ENCODE measurements at regions of chr9 and their contacts with region 1.

Region 1: GRCh38 chr9:98654247-98654646 is 54.5 kb downstream of the GABBR2 start:
- DNase-seq: no peak
- ATAC-seq: no peak
- H3K4me3 ChIP-seq: no peak overlapping the region
- H3K27ac ChIP-seq: no peak overlapping the region
- H3K4me1 ChIP-seq: no peaks in the 10 kb centered on the region
- H3K27me3 ChIP-seq: no peaks in the 10 kb centered on the region
- CTCF ChIP-seq: no peak
- POLR2A ChIP-seq: no peak

Region 2: DNA sequence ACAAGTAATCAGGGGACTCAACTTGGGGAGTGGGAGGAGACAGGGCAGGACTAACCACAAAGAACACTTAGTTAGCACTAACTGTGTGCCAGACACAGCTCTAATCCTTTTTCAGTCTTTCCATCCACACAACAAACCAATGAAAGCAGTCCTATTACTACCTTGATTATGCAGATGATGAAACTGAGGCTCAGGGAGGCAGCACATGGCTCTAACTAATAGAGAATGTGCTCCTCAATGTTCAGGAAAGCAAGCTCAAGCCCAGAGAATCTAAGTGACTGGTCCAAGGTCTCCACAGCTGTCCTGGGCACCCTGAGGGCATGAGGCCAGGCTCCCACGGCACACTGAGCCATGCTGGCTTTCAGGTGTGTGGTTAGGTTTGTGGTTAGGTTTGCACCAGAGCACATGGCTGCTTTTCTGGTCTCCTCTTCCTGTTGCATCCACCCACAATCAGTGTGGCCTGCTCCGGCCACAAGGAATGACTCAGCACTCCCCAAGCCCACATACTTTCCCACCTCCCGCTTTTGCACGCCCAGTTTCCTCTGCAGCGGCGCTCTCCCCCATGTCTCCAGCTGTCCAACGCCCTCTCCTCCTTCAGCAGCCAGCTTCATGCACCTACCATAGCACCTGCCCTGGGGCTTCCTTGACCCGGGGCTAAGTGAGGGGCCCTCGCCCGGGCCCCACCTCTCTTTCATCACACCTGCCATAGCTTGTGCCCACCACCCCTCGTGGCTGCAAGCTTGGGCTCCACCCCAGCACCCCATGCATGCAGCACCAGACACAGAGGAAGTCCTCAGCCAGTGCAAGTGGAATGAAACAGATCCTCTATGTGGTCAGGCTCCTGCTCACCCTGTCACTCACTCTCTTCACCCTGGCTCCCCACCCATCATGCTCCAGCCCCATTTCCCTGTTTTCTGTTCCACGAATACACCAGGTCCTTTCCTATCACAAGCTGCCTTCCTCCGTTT is 78.6 kb before region 1 on chr9:
- in situ Hi-C with region 1: no loop called
- intact Hi-C with region 1: loop called (anchors 10 kb)
- DNase-seq: no peak
- ATAC-seq: no peak
- H3K4me3 ChIP-seq: no peak overlapping the region
- H3K27ac ChIP-seq: no peak overlapping the region
- H3K4me1 ChIP-seq: no peaks in the 10 kb centered on the region
- H3K27me3 ChIP-seq: peaks cover 0 to 4% (median 0%) of the 10 kb centered on the region in 3 donors
- CTCF ChIP-seq: no peak
- POLR2A ChIP-seq: no peak

Region 3: DNA sequence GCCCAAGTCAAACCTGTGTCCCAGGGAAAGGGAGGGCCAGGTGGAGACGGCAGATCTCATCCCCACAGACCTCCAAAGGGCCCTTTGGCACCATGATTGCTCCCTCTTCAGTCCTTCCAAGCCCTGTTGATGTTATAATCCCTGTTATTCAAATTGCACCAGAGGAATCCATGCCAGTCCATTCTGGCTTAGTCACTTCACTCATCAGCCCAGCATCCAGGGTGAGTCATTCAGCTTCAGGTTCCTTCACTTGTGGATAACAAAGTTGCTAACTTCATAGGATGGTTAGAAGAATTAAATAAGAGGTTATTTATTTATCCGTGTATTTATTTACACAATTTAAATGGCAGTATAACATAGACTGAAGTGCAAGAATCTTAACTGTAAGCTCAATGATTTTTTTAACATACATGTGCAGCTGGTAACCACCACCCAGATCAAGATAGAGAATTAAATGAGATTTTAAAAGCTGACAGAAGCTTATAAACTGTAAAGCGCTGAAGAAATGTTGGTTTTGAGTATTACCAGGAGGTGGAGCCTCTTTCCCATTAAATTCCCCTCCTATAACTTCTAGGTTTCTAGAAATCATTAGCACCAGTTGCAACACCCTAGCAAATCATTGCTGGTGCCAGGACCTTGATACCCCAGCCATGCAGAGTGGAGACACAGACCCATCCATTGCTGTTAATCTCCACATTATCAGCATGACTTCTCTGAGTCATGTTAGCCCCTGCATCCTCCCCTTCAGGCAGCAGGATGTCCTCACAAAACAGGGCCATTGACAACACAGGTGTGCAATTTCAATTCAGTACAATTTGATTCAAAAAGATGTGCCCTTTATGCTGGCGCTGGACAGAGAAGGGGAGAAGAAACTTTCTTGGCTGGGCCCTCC is 645.2 kb after region 1 on chr9:
- in situ Hi-C with region 1: no loop called
- intact Hi-C with region 1: no loop called
- DNase-seq: peak in 1 of 2 donors; percentile 20
- ATAC-seq: peak; percentile 79 to 91
- H3K4me3 ChIP-seq: no peak overlapping the region
- H3K27ac ChIP-seq: peak overlapping the region in 1 of 4 donors; percentile 11
- H3K4me1 ChIP-seq: peaks cover 0 to 5% of the 10 kb centered on the region in 2 donors
- H3K27me3 ChIP-seq: no peaks in the 10 kb centered on the region
- CTCF ChIP-seq: peak in 1 of 5 experiments; percentile 23
- POLR2A ChIP-seq: no peak

Measured in gastrocnemius medialis (tissue), 4 donors.